Heart left ventricle (tissue), 16 donors: ENCODE measurements at regions of chr1 and their contacts with region 1.

Region 1: GRCh38 chr1:68725001-68725752 is 228.3 kb upstream of the DEPDC1 start:
- DNase-seq: peak; percentile 64 to 87 (median 82)
- ATAC-seq: peak; percentile 98 to 100 (median 98)
- H3K4me3 ChIP-seq: no peak overlapping the region
- H3K27ac ChIP-seq: peak overlapping the region in 6 of 12 donors; percentile 32 to 67 (median 50)
- H3K4me1 ChIP-seq: peaks cover 0 to 16% (median 0%) of the 10 kb centered on the region in 12 donors
- H3K27me3 ChIP-seq: no peaks in the 10 kb centered on the region
- CTCF ChIP-seq: no peak
- POLR2A ChIP-seq: no peak

Region 2: DNA sequence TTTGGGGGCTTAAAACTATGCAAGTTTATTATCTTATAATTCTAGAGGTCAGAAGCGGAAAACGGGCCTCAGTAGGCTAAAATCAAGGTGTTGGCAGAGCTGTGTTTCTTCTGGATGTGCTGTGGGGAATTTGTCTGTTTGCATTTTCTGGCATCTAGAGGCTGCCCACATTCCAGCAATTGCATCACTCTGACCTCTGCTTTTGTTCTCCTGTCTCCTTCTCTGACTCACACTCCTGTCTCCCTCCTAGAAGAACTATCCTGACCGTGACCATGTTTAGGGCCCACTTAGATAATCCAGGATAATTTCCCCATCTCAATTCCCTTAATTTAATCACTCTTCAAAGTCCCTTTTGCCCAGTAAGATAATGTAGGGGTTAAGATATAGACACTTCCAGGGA is 100.9 kb before region 1 on chr1:
- intact Hi-C with region 1: loop called in 4 of 10 experiments (anchors 2 to 5 kb)
- DNase-seq: no peak
- ATAC-seq: peak; percentile 63 to 90 (median 80)
- H3K4me3 ChIP-seq: no peak overlapping the region
- H3K27ac ChIP-seq: peak overlapping the region in 11 of 12 donors; percentile 2 to 73 (median 56)
- H3K4me1 ChIP-seq: peaks cover 0 to 10% (median 0%) of the 10 kb centered on the region in 12 donors
- H3K27me3 ChIP-seq: no peaks in the 10 kb centered on the region
- CTCF ChIP-seq: no peak
- POLR2A ChIP-seq: no peak

Region 3: GRCh38 chr1:68904477-68904876 is 179.3 kb after region 1 on chr1:
- intact Hi-C with region 1: no loop called
- DNase-seq: no peak
- ATAC-seq: no peak
- H3K4me3 ChIP-seq: no peak overlapping the region
- H3K27ac ChIP-seq: no peak overlapping the region
- H3K4me1 ChIP-seq: no peaks in the 10 kb centered on the region
- H3K27me3 ChIP-seq: no peaks in the 10 kb centered on the region
- CTCF ChIP-seq: no peak
- POLR2A ChIP-seq: no peak